Right cardiac atrium (tissue), 5 donors: ENCODE measurements at regions of chr10 and their contacts with region 1.

Region 1: GRCh38 chr10:15719899-15720634 is at the start of gene ITGA8:
- DNase-seq: peak; percentile 55 to 81 (median 79)
- ATAC-seq: peak; percentile 86 to 88
- H3K4me3 ChIP-seq: peak within 1 kb of the TSS; percentile 77
- H3K27ac ChIP-seq: no peak within 1 kb of the TSS
- H3K4me1 ChIP-seq: no peaks in the 10 kb centered on the region
- H3K27me3 ChIP-seq: no peaks in the 10 kb centered on the region
- total RNA-seq, gene ITGA8: 3.7 to 8.8 (median 5.6) TPM

Region 2: GRCh38 chr10:15439341-15439842 is 280.7 kb before region 1 on chr10:
- intact Hi-C with region 1: loop called (anchors 5 kb)
- DNase-seq: peak; percentile 80 to 89 (median 83)
- ATAC-seq: peak; percentile 93 to 97
- H3K4me3 ChIP-seq: peak overlapping the region; percentile 39
- H3K27ac ChIP-seq: peak overlapping the region; percentile 54
- H3K4me1 ChIP-seq: peaks cover 2% of the 10 kb centered on the region
- H3K27me3 ChIP-seq: no peaks in the 10 kb centered on the region

Region 3: DNA sequence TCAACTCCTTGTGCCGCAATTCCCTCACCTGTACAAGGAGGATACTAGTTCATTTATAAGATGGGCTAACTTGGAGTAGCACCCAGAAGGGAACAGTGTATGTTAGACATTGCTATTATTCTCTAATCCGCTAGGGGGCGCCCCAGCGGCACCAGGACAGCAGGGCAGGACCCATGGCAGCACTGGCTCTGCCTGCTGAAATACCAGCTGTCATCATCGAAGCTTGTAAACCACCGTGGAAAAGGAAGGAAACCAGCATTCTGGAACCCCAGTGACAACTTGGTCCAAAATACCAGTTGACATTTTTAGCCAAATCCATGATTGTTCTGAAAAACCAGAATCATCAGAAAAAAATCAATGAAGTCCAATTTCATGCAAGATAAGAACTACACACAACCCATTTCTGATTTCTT is 134.8 kb before region 1 on chr10:
- intact Hi-C with region 1: loop called in 2 of 4 experiments (anchors 10 kb)
- DNase-seq: peak; percentile 67 to 77 (median 77)
- ATAC-seq: peak; percentile 79 to 95
- H3K4me3 ChIP-seq: no peak overlapping the region
- H3K27ac ChIP-seq: no peak overlapping the region
- H3K4me1 ChIP-seq: no peaks in the 10 kb centered on the region
- H3K27me3 ChIP-seq: no peaks in the 10 kb centered on the region

Region 4: GRCh38 chr10:15595260-15595659 is 124.8 kb before region 1 on chr10:
- intact Hi-C with region 1: loop called in 1 of 4 experiments (anchors 10 kb)
- DNase-seq: no peak
- ATAC-seq: no peak
- H3K4me3 ChIP-seq: no peak overlapping the region
- H3K27ac ChIP-seq: no peak overlapping the region
- H3K4me1 ChIP-seq: no peaks in the 10 kb centered on the region
- H3K27me3 ChIP-seq: no peaks in the 10 kb centered on the region